Activated CD8-positive, alpha-beta memory T cell treated with anti-CD3 and anti-CD28 coated beads, Interleukin-2, amount 10 ng/mL, durations not matched to agents 7 days and 5 days (primary cell): ENCODE measurements at regions of chr17 and their contacts with region 1.

Region 1: DNA sequence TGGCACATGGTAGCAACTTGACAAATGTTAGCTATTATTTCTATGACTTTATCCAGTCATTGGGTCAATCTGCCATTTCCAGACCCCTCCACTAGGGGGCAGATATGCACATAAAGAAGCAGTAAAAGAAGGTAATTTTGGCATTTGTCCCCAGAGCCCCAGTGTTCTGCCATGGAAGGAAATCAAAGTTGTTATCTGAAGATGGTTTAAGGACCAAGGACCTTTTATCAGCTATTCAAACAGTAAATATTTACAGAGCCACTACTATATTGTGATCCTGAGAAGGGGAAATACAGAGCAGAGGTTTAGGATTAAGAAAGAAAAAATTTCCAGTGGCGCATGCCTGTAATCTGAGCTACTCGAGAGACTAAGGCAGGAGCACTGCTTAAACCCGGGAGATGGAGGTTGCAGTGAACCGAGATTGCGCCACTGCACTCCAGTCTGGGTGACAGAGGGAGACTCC is 20.0 kb downstream of the TRAF4 start:
- DNase-seq: peak; percentile 86
- ATAC-seq: peak; percentile 70
- H3K4me3 Mint-ChIP-seq: no peak overlapping the region
- H3K27ac Mint-ChIP-seq: peak overlapping the region; percentile 50
- H3K4me1 Mint-ChIP-seq: peaks cover 42% of the 10 kb centered on the region
- H3K27me3 Mint-ChIP-seq: no peaks in the 10 kb centered on the region

Region 2: DNA sequence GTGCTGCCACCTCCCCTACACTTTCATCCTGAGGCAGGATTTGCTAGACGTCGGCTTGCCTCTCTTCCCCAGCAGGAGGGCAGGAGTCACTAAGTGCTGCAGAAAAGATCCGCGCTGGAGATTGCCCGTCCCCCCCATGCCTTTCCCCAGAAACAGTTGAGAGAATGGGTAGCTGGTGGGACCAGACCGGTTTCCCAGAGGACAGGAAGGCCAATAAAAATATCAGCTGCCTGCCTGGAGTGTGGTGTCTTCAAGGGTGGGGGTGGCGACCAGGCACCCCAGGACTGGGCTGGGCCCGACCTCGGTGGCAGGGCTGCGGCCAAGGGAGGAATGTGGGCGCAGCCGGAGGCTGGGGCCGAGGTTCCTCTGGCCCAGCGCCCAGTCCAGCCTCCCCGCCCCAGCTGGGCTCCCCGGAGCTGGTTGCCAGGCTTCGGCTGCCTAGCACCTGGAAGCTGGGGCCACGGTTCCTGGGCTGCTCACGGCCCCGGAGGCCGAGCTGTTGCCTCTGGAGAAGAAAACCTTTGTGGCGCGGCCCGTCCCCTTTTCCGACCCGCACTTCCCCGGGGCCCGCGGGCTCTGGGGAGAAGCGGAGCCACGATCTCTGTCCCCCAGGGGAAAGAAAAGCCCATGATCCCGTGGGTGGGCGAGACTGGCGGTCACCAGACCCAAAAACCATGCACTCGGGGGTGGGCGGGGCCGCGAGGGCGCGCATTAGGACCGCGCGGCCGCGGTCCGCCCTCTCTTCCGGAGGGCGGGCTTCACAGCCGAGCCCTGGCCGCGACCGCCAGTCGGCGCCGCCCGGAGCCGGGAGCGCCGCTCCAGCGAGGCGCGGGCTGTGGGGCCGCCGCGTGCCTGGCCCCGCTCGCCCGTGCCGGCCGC is 20.4 kb before region 1 on chr17 and contains the start of gene TRAF4:
- CTCF ChIA-PET with region 1: interaction called, 98 read pairs
- DNase-seq: peak; percentile 81
- ATAC-seq: peak; percentile 91
- H3K4me3 Mint-ChIP-seq: peak within 1 kb of the TSS; percentile 89
- H3K27ac Mint-ChIP-seq: peak within 1 kb of the TSS; percentile 95
- H3K4me1 Mint-ChIP-seq: peaks cover 38% of the 10 kb centered on the region
- H3K27me3 Mint-ChIP-seq: no peaks in the 10 kb centered on the region
- total RNA-seq, gene TRAF4: 60.1 to 107 TPM

Region 3: GRCh38 chr17:28788100-28788499 is 24.3 kb after region 1 on chr17:
- CTCF ChIA-PET with region 1: interaction called, 18 read pairs
- DNase-seq: no peak
- ATAC-seq: no peak
- H3K4me3 Mint-ChIP-seq: no peak overlapping the region
- H3K27ac Mint-ChIP-seq: no peak overlapping the region
- H3K4me1 Mint-ChIP-seq: peaks cover 1% of the 10 kb centered on the region
- H3K27me3 Mint-ChIP-seq: no peaks in the 10 kb centered on the region

Region 4: GRCh38 chr17:28834420-28834819 is 70.6 kb after region 1 on chr17:
- CTCF ChIA-PET with region 1: interaction called, 13 read pairs
- DNase-seq: no peak
- ATAC-seq: no peak
- H3K4me3 Mint-ChIP-seq: no peak overlapping the region
- H3K27ac Mint-ChIP-seq: no peak overlapping the region
- H3K4me1 Mint-ChIP-seq: peaks cover 5% of the 10 kb centered on the region
- H3K27me3 Mint-ChIP-seq: no peaks in the 10 kb centered on the region

Region 5: DNA sequence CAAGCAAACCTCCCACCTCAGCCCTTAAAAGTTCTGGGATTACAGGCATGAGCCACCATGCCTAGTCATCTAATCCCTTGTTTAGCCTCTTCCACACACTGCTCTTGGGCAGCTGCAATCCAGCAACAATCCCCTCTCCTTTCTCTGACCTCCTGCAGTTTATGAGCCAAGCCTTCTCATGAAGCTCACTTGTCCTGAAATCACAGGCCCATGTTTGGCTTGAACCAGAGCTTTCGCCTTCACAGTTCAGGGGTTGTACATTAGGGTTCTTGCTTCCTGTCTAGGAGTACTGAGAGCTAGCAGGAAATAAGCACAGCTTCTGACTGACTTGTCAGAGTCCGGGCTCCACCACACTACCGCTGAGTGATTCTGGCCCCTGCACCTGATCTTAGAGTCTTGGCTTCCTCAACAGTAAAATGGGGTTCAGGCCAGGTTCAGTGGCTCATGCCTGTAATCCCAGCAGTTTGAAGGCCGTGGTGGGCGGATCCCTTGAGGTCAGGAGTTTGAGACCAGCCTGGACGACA is 107.3 kb after region 1 on chr17:
- CTCF ChIA-PET with region 1: interaction called, 10 read pairs
- DNase-seq: peak; percentile 86
- ATAC-seq: peak; percentile 99
- H3K4me3 Mint-ChIP-seq: no peak overlapping the region
- H3K27ac Mint-ChIP-seq: peak overlapping the region; percentile 93
- H3K4me1 Mint-ChIP-seq: peaks cover 24% of the 10 kb centered on the region
- H3K27me3 Mint-ChIP-seq: no peaks in the 10 kb centered on the region

Region 6: DNA sequence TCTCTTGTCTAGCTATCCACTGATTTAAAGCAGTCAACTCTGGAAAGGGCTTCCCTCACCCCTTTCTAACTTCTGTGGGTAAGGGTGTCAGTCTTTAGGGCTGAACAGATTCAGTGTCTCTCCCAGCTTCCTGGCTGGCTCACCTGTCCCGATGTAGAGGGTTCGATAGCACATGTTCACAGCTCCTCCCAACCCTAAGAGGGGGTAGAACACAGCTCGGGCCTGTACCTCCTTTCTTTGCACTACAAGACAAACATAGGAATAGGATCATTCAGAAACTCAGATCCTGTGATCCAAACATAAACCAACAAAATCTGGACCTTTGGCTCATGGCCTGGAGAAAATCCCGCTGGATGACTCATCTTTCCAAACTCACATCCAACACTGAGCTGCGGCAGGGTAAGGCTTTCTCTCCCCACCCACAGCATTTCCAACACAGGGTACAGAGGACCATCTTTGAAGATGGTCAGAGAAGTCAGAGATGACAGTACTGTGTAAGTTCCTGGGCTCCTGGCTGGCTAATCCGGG is 144.9 kb after region 1 on chr17:
- CTCF ChIA-PET with region 1: interaction called, 68 read pairs
- DNase-seq: no peak
- ATAC-seq: no peak
- H3K4me3 Mint-ChIP-seq: no peak overlapping the region
- H3K27ac Mint-ChIP-seq: peak overlapping the region; percentile 13
- H3K4me1 Mint-ChIP-seq: peaks cover 7% of the 10 kb centered on the region
- H3K27me3 Mint-ChIP-seq: no peaks in the 10 kb centered on the region